PC-9 (cell line): ENCODE measurements at regions of chr19 and their contacts with region 1.

Region 1: GRCh38 chr19:9018163-9018875 is 8.1 kb upstream of the MUC16 start:
- DNase-seq: peak; percentile 94 to 98
- H3K4me3 ChIP-seq: peak overlapping the region; percentile 44; the same call in 1 of the 2 replicates
- H3K27ac ChIP-seq: peak overlapping the region; percentile 95
- H3K4me1 ChIP-seq: peaks cover 13% of the 10 kb centered on the region
- H3K27me3 ChIP-seq: no peaks in the 10 kb centered on the region
- CTCF ChIP-seq: no peak

Region 2: DNA sequence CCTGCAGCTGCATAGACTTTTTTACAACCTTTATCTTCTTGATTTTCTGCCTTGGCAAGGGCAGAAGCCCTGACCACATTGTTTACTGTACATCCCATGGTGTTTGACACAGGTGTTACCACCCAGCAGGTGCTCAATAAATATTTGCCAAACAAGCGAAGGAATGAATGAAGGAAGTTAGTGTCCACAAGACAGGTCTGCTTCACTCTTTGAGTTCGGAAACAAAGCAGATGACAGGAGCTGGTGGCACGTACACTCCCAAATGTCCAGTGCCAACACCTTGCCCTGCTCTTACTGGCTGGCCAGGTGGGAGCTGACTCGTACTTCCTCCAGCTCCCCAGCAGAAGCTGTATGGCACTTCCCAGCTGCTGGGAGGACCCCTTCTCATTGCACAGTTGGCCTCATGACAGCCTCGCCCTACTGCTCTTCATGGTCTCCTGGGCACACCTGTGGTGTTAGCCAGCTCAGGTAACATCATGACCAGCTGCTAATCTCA is 13.9 kb after region 1 on chr19:
- CTCF ChIA-PET with region 1: interaction called, 7 read pairs
- POLR2A ChIA-PET with region 1: interaction called, 8 read pairs
- intact Hi-C with region 1: loop called (anchors 1 kb)
- DNase-seq: peak; percentile 81 to 100
- H3K4me3 ChIP-seq: no peak overlapping the region
- H3K27ac ChIP-seq: peak overlapping the region; percentile 52
- H3K4me1 ChIP-seq: peaks cover 27% of the 10 kb centered on the region
- H3K27me3 ChIP-seq: no peaks in the 10 kb centered on the region
- CTCF ChIP-seq: no peak

Region 3: GRCh38 chr19:9037390-9038062 is 19.2 kb after region 1 on chr19:
- CTCF ChIA-PET with region 1: interaction called, 7 read pairs
- POLR2A ChIA-PET with region 1: interaction called, 8 read pairs
- intact Hi-C with region 1: loop called (anchors 1 kb)
- DNase-seq: peak; percentile 63 to 64
- H3K4me3 ChIP-seq: no peak overlapping the region
- H3K27ac ChIP-seq: no peak overlapping the region
- H3K4me1 ChIP-seq: peaks cover 49% of the 10 kb centered on the region
- H3K27me3 ChIP-seq: no peaks in the 10 kb centered on the region
- CTCF ChIP-seq: no peak

Region 4: DNA sequence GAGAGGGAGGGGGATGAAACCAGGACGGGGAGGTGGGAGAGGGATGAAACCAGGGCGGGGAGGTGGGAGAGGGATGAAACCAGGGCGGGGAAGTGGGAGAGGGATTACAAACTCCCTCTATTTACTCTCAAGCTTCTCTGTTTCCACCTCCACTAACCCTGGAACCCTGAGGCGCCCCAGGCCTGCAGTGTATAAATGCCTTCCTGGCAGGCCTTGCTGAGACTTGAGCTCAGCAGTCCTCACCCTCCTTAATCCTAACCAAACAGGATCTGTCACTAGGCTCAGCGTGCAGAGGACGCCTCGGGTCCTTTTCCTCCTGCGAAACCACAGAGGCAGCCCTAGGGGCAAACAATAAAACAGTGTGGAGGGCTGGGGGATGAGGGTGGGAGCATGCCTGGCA is 36.4 kb after region 1 on chr19:
- CTCF ChIA-PET with region 1: interaction called, 4 read pairs
- POLR2A ChIA-PET with region 1: interaction called, 26 read pairs
- intact Hi-C with region 1: loop called (anchors 1 kb)
- DNase-seq: peak; percentile 90 to 98
- H3K4me3 ChIP-seq: peak overlapping the region; percentile 35; the same call in 1 of the 2 replicates
- H3K27ac ChIP-seq: peak overlapping the region; percentile 92
- H3K4me1 ChIP-seq: peaks cover 73% of the 10 kb centered on the region
- H3K27me3 ChIP-seq: no peaks in the 10 kb centered on the region
- CTCF ChIP-seq: no peak

Region 5: GRCh38 chr19:9070066-9070465 is 51.7 kb after region 1 on chr19:
- CTCF ChIA-PET with region 1: no interaction called
- POLR2A ChIA-PET with region 1: interaction called, 14 read pairs
- intact Hi-C with region 1: loop called (anchors 1 kb)
- DNase-seq: peak; percentile 42 to 66
- H3K4me3 ChIP-seq: no peak overlapping the region
- H3K27ac ChIP-seq: no peak overlapping the region
- H3K4me1 ChIP-seq: peaks cover 16% of the 10 kb centered on the region
- H3K27me3 ChIP-seq: no peaks in the 10 kb centered on the region
- CTCF ChIP-seq: no peak

Region 6: DNA sequence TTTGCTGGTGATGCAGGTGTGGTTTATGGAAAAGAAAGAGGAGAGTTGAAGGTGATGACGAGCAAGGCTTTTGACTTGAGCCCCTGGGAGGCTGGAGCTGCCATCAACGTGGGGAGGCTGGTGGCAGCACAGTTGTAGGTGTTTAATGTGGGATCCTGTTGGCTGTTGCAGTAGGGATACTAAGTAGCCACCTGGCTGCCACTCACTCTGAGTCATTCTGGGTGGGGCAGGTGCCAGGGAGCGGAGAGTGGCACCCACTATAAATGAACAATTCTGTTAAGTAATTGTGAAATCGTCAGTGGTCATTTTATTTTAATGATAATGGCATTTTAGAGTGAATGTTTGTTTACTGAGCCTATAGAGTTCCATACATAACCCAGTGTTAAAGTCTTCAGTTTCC is 131.7 kb after region 1 on chr19:
- CTCF ChIA-PET with region 1: no interaction called
- POLR2A ChIA-PET with region 1: no interaction called
- intact Hi-C with region 1: no loop called
- DNase-seq: no peak
- H3K4me3 ChIP-seq: no peak overlapping the region
- H3K27ac ChIP-seq: no peak overlapping the region
- H3K4me1 ChIP-seq: no peaks in the 10 kb centered on the region; the same call in none of the 2 replicates
- H3K27me3 ChIP-seq: no peaks in the 10 kb centered on the region
- CTCF ChIP-seq: no peak